ENCODE measurements at regions of chr16 and their contacts with region 1.

Region 1: DNA sequence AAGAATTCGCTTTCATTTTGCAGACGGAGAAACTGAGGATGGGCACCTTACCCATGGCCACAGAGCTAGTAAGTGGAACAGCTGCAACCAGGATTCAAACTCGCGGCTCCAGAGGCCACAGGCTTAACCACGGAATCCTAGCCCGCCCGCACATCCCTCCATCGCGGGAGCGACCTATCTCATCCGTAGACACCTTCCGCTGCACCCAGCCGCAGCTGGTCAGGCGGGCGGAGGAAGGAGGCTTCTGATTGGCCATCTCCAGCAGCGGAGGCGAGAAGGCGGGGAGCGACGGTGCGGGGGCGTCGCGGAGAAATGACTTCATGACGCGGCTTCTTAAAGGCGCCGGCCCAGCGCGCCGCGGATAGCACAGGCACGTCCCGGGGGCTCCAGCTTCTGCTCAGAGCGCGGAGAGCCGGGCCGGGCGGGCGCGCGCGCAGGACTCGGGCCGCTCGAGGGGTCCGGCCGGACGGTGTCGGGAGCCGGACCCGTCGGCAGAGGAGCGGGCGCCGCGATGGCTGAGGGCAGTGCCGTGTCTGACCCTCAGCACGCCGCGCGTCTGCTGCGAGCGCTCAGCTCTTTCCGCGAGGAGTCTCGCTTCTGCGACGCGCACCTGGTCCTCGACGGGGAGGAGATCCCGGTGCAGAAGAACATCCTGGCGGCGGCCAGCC is at the start of gene GAN:
- DNase-seq: peak; percentile 98
- H3K4me3 ChIP-seq: peak within 1 kb of the TSS; percentile 59 to 94 (median 93)
- H3K27ac ChIP-seq: peak within 1 kb of the TSS; percentile 67
- H3K4me1 ChIP-seq: peaks cover 16% of the 10 kb centered on the region
- H3K27me3 ChIP-seq: no peaks in the 10 kb centered on the region
- CTCF ChIP-seq: no peak
- POLR2A ChIP-seq: peak; percentile 76
- total RNA-seq, gene GAN: 11.1 and 12.2 TPM in 2 replicates

Region 2: DNA sequence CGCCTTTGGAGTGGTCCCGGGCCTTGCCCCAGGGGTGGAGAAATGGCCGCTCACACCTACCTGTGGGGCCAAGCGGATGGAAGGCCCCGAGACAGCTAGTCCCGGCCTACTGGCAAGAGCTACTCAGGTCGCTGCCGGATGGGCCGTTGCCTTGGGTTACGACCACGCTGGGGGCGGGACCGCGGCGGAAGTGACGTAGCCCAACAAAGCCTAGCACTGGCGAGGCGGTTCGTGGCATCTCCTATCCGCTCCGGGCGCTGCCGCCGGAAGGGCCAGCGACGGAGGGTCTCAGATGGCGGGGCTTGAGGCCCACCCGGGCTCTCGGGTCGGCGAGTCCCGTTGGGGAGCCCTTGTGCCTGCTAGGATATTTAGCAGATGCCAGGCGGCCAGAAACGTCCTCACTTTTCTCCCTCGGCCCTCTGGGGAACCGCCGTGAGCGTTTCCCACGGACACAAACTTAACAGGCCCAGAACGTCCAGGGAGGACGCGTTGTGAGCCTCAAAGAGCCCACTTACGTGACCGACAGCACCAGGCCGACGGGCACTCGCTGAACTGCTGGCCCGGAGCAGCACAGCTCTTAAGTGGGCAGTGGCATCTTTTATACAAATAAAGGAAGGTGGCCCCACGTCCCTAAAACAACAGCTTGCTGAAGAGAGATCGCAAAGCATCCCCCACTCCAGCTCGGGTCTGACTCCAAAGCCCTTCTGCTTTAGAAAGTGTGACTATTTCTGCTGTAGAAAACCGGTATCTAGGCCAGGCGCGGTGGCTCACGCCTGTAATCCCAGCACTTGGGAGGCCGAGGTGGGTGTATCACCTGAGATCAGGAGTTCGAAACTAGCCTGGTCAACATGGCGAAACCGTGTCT is 237.4 kb before region 1 on chr16 and contains the start of gene C16orf46:
- CTCF ChIA-PET with region 1: no interaction called
- POLR2A ChIA-PET with region 1: no interaction called
- dilution Hi-C with region 1: no loop called
- intact Hi-C with region 1: loop called (anchors 1 kb)
- DNase-seq: peak; percentile 97
- H3K4me3 ChIP-seq: peak within 1 kb of the TSS; percentile 48 to 52 (median 49)
- H3K27ac ChIP-seq: peak within 1 kb of the TSS; percentile 91
- H3K4me1 ChIP-seq: peaks cover 7% of the 10 kb centered on the region
- H3K27me3 ChIP-seq: no peaks in the 10 kb centered on the region
- CTCF ChIP-seq: no peak
- POLR2A ChIP-seq: peak; percentile 80
- total RNA-seq, gene C16orf46: 0.53 TPM in 1 of 2 replicates, not detected in the other

Region 3: DNA sequence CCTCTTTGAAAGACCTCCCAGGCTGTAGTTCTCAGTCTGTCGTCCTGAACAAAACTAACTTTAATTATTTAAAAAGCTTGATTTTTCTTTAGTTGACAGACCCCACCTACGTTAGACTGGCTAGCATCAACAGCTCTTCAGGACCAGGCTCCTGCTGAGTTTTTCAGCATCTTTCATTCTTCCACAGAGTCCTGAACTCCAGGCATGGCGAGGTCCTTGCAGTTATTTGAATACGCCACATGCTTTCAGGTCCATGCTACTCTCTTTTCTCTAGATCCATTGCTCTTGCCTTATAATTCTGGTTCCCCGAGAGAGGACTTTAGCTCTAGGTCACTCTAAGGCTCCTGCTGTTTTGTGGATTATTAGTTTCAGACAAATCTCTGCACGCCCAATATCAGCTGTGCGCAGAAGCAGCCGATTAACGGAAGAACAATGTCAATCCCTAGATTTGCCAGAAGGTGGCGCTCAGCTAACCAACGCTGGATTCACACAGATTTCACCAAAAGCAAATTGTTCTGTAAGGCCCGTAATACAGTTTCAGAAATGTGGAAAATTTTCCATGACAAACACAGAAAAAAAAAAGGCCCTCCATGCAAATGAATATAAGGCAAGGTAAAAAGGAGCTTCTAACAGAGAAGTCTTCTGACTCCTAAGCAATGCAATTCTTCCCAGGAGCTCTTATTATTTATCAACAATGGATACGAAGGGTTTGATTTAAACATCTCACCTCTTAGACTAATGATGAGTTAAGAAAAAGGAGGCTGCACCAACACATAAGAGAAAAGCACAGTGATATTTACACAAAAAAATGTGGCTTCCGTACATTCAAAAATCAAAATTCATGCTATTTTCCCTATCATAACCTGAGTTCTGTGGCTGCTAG is 109.7 kb before region 1 on chr16:
- CTCF ChIA-PET with region 1: interaction called, 8 read pairs
- POLR2A ChIA-PET with region 1: no interaction called
- dilution Hi-C with region 1: no loop called
- intact Hi-C with region 1: loop called (anchors 1 kb)
- DNase-seq: peak; percentile 73
- H3K4me3 ChIP-seq: no peak overlapping the region
- H3K27ac ChIP-seq: no peak overlapping the region
- H3K4me1 ChIP-seq: no peaks in the 10 kb centered on the region
- H3K27me3 ChIP-seq: peaks cover 0 to 3% of the 10 kb centered on the region in 2 experiments
- CTCF ChIP-seq: peak; percentile 45 to 69
- POLR2A ChIP-seq: no peak

Region 4: DNA sequence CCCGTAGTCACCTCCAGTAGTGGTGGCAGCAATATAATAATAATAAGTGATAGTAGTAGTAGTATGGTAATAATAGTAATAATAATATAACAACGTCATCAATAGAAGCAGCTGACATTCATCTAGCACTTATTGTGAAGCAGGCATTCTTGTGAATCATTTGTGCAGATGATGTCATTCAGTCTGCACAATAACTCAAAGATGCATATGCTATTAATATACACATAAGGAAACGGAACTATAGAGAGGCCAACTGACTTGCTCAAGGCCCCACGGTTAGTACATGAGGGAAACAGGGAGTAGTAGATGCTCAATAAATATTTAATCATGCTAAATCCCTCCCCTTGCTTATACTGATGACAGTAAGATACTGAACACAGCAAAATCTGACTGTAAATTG is 35.3 kb before region 1 on chr16:
- CTCF ChIA-PET with region 1: interaction called, 5 read pairs
- POLR2A ChIA-PET with region 1: interaction called, 4 read pairs
- dilution Hi-C with region 1: no loop called
- intact Hi-C with region 1: loop called (anchors 1 kb)
- DNase-seq: peak; percentile 76
- H3K4me3 ChIP-seq: no peak overlapping the region
- H3K27ac ChIP-seq: peak overlapping the region; percentile 91
- H3K4me1 ChIP-seq: peaks cover 21% of the 10 kb centered on the region
- H3K27me3 ChIP-seq: no peaks in the 10 kb centered on the region
- CTCF ChIP-seq: no peak
- POLR2A ChIP-seq: no peak

Region 5: GRCh38 chr16:81324808-81325207 is 10.1 kb after region 1 on chr16:
- CTCF ChIA-PET with region 1: no interaction called
- POLR2A ChIA-PET with region 1: no interaction called
- dilution Hi-C with region 1: no loop called
- intact Hi-C with region 1: no loop called
- DNase-seq: no peak
- H3K4me3 ChIP-seq: no peak overlapping the region
- H3K27ac ChIP-seq: no peak overlapping the region
- H3K4me1 ChIP-seq: no peaks in the 10 kb centered on the region
- H3K27me3 ChIP-seq: no peaks in the 10 kb centered on the region
- CTCF ChIP-seq: no peak
- POLR2A ChIP-seq: no peak

Region 6: DNA sequence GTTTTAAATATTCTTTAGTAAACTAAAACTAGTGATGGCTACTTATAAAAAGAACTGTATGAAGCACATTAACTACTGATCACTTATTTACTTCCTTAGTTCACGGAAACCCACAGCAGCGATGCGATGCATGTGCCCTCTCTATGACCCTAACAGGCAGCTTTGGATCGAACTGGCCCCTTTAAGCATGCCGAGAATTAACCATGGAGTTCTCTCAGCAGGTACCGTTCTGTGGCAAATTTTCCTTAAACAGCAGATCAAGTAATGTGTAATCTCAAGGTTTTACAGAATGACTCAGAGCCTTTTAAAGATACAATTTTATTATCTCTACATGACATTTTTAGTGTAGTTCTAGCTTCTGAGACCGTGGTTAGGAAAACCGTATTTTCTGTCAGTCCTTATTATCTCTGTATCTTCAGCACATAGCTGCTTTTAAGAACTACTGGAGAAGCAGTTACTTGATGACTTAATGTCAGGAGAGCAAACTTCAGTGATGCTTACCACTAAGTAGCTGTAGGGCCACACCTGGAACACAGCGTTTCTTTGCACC is 43.0 kb after region 1 on chr16:
- CTCF ChIA-PET with region 1: no interaction called
- POLR2A ChIA-PET with region 1: no interaction called
- dilution Hi-C with region 1: no loop called
- intact Hi-C with region 1: no loop called
- DNase-seq: no peak
- H3K4me3 ChIP-seq: no peak overlapping the region
- H3K27ac ChIP-seq: no peak overlapping the region
- H3K4me1 ChIP-seq: no peaks in the 10 kb centered on the region
- H3K27me3 ChIP-seq: no peaks in the 10 kb centered on the region
- CTCF ChIP-seq: no peak
- POLR2A ChIP-seq: no peak

Region 7: GRCh38 chr16:81737885-81738786 is 423.4 kb after region 1 on chr16:
- CTCF ChIA-PET with region 1: no interaction called
- POLR2A ChIA-PET with region 1: no interaction called
- dilution Hi-C with region 1: no loop called
- intact Hi-C with region 1: loop called (anchors 1 kb)
- DNase-seq: peak; percentile 81
- H3K4me3 ChIP-seq: peak overlapping the region in 1 of 3 experiments; percentile 40
- H3K27ac ChIP-seq: no peak overlapping the region
- H3K4me1 ChIP-seq: peaks cover 4% of the 10 kb centered on the region
- H3K27me3 ChIP-seq: no peaks in the 10 kb centered on the region
- CTCF ChIP-seq: peak; percentile 77 to 83
- POLR2A ChIP-seq: no peak

Region 8: DNA sequence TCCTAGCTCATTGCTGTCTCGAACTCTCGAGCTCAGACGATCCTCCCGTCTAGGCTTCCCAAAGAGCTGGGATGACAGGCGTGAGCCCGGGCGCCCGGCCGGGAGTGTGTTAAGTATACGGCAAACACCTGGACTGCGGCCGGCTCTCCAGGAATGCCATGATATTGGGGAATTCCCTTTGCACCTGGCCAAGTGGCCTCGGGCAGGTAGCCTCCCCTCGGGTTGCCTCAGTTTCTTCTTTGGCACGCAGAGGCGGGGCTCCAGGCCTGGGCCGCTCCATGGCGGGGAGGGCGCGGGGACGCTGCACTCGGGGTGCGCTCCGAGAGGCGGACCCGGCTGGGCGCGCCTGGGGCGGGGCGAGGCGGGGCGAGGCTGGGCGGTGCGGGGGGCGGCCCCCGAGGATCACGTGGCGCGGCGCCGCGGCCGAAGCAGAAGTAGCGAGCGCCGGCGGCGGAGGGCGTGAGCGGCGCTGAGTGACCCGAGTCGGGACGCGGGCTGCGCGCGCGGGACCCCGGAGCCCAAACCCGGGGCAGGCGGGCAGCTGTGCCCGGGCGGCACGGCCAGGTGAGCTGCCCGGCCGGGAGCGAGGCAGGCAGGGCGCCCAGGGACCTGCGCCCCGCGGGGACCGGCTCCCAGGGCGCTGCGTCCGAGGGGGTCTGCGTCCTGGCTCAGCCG is 464.3 kb after region 1 on chr16 and contains the start of gene PLCG2:
- CTCF ChIA-PET with region 1: no interaction called
- POLR2A ChIA-PET with region 1: no interaction called
- dilution Hi-C with region 1: no loop called
- intact Hi-C with region 1: loop called (anchors 1 kb)
- DNase-seq: peak; percentile 60
- H3K4me3 ChIP-seq: peak within 1 kb of the TSS; percentile 59 to 85 (median 70)
- H3K27ac ChIP-seq: no peak within 1 kb of the TSS
- H3K4me1 ChIP-seq: peaks cover 6% of the 10 kb centered on the region
- H3K27me3 ChIP-seq: peaks cover 5% of the 10 kb centered on the region in 2 experiments
- CTCF ChIP-seq: no peak
- POLR2A ChIP-seq: no peak
- total RNA-seq, gene PLCG2: 9.6 and 13.6 TPM in 2 replicates

Measured in endothelial cell of umbilical vein (primary cell).